ENCODE measurements at regions of chr14 and their contacts with region 1.

Region 1: DNA sequence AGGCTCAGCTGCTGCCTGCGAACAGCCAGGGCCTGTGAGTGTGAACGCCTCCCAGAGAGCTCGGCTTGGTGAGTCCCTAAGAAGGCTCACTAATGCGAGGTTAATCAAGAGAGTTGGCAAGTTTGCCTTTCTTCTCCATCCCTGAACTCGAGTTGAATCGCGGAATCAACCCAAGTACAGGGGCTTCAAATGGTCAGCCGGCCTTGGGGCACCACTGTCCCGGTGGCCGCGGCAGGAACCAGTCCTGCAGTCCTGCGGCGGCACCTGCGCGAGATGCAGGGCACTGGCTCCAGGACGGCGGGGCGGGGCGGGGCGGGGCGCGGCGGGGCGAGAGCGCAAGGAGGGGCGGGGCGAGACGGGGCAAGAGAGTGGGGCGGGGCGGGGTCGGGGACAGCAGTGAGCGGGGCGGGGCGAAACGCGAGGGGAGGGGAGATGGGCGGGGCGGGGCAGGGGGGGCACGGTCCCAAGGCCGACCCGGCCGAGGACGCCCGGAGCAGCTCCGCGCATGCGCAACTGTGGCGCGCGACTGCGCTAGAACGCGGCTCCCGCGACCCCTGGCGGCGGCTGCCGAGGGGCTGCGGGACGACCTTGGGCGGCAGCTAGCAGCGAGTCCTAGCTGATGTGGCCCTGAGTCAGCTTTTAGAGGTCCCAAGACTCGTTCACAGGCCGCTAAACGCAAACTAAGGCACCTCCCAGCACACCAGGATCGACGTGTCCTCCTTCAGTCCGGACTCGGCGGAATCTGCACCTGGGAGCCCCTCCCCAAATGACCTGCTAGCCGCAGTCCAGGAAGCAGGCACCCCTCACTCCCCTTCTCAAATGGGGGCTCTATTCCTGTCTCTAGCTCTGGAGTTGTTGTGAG is 58.0 kb downstream of the TTC7B start:
- DNase-seq: peak; percentile 96
- ATAC-seq: peak; percentile 85
- H3K4me3 ChIP-seq: peak overlapping the region; percentile 59 to 77 (median 66)
- H3K4me3 Mint-ChIP-seq: peak overlapping the region; percentile 82
- H3K27ac ChIP-seq: peak overlapping the region; percentile 71 to 79
- H3K27ac Mint-ChIP-seq: peak overlapping the region; percentile 66
- H3K4me1 ChIP-seq: peaks cover 22 to 29% of the 10 kb centered on the region in 2 donors
- H3K4me1 Mint-ChIP-seq: peaks cover 20% of the 10 kb centered on the region
- H3K27me3 ChIP-seq: no peaks in the 10 kb centered on the region
- H3K27me3 Mint-ChIP-seq: peaks cover 3% of the 10 kb centered on the region
- CTCF ChIP-seq: peak; percentile 78

Region 2: DNA sequence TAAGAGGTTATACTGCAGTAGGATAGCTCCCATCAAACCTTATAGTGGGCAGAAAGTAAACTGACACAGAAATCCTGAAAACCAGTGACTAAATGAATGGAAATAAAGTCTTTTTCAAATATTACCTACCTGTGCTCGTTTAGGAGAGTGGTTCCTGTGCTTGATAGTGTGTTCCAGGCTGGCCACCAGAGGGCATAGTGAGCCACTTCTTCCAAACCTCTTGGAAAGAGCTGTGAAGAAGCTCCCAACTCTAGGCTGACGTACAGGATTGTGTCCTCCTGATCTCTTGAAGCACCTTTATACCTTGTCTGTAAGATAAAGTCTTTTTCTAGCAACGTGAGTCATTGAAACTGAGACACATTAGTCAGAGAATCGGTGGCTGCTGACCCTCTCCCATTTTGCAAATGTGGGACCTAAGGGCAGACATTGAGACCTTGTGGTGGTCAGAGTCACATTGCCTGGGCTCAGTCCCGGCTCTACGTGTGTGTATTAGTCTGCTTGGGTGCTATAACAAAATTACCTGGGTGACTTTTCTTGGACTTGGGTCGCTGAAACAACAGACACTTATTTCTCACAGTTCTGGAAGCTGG is 784.9 kb before region 1 on chr14:
- CTCF ChIA-PET with region 1: interaction called, 16 read pairs
- POLR2A ChIA-PET with region 1: no interaction called
- intact Hi-C with region 1: no loop called
- DNase-seq: peak; percentile 55
- ATAC-seq: peak; percentile 41
- H3K4me3 ChIP-seq: no peak overlapping the region
- H3K4me3 Mint-ChIP-seq: no peak overlapping the region
- H3K27ac ChIP-seq: no peak overlapping the region
- H3K27ac Mint-ChIP-seq: no peak overlapping the region
- H3K4me1 ChIP-seq: no peaks in the 10 kb centered on the region
- H3K4me1 Mint-ChIP-seq: no peaks in the 10 kb centered on the region
- H3K27me3 ChIP-seq: no peaks in the 10 kb centered on the region
- H3K27me3 Mint-ChIP-seq: no peaks in the 10 kb centered on the region
- CTCF ChIP-seq: peak; percentile 84

Region 3: DNA sequence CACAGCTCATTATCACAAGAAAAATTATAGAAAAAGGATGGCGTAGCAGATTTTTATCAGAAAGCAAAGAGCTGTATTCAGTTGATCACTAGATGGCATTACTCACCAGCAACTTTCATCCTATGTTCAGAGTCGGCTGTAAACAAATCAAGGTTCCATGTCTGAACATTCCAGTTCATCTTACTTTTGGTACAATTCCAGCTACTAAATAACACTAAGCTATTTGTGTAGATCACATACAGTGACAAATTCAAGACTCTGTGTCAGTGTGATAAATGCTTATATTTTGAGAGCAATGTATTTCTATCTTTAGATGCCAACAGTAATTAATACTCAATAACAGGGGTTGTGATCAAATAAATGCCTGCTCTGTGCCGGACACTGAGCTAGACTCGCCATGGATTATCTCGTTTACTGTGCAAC is 456.6 kb before region 1 on chr14:
- CTCF ChIA-PET with region 1: interaction called, 12 read pairs
- POLR2A ChIA-PET with region 1: no interaction called
- intact Hi-C with region 1: no loop called
- DNase-seq: peak; percentile 22
- ATAC-seq: no peak
- H3K4me3 ChIP-seq: no peak overlapping the region
- H3K4me3 Mint-ChIP-seq: no peak overlapping the region
- H3K27ac ChIP-seq: no peak overlapping the region
- H3K27ac Mint-ChIP-seq: no peak overlapping the region
- H3K4me1 ChIP-seq: no peaks in the 10 kb centered on the region
- H3K4me1 Mint-ChIP-seq: peaks cover 5% of the 10 kb centered on the region
- H3K27me3 ChIP-seq: no peaks in the 10 kb centered on the region
- H3K27me3 Mint-ChIP-seq: no peaks in the 10 kb centered on the region
- CTCF ChIP-seq: peak; percentile 28

Region 4: DNA sequence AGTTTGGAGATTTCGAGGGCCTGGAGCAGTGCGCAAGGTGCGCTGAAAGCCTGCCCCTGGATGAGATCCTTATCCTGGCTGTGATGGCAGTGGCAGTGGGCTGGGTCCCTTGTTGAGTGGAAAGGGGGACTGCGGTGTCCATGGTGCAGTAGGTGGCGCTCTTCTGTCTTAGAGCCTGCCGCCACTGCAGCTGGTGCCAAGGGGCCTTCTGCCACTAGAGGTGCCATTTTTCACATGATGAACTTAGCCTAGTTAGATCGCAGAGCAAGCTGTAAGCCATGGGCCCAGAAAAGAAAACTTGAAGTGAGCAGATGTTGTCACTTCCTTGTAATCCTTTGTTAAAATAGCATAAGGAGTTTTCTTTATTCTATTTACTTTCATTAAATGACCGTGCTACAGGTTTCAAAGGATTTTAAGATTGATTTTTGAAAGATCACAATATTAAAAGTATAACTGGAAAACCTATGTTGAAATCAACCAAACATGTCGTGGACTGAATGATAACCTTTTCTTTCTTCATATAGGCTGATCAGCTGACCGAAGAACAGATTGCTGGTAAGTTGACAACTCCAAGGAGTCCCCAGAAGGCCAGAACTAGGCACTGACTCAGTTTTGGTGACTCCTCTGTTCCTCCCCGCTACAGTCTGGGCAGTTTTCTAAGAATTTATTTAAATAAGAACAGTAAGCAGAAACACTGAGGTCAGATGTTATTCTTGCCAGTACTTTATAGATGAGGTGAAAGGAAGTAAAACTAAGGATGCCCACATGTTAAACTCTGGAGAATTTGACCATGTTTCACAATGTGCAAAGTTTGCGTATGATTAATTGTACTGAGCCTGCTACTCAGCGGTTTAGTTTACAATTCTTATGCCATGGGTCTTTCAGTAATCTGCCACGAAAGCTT is 358.5 kb before region 1 on chr14:
- CTCF ChIA-PET with region 1: interaction called, 24 read pairs
- POLR2A ChIA-PET with region 1: interaction called, 20 read pairs
- intact Hi-C with region 1: no loop called
- DNase-seq: peak; percentile 92
- ATAC-seq: peak; percentile 39
- H3K4me3 ChIP-seq: peak overlapping the region in 1 of 5 experiments; percentile 85
- H3K4me3 Mint-ChIP-seq: peak overlapping the region; percentile 96
- H3K27ac ChIP-seq: peak overlapping the region; percentile 93 to 95
- H3K27ac Mint-ChIP-seq: peak overlapping the region; percentile 98
- H3K4me1 ChIP-seq: peaks cover 39 to 45% of the 10 kb centered on the region in 2 donors
- H3K4me1 Mint-ChIP-seq: peaks cover 46% of the 10 kb centered on the region
- H3K27me3 ChIP-seq: no peaks in the 10 kb centered on the region
- H3K27me3 Mint-ChIP-seq: no peaks in the 10 kb centered on the region
- CTCF ChIP-seq: peak; percentile 100

Region 5: DNA sequence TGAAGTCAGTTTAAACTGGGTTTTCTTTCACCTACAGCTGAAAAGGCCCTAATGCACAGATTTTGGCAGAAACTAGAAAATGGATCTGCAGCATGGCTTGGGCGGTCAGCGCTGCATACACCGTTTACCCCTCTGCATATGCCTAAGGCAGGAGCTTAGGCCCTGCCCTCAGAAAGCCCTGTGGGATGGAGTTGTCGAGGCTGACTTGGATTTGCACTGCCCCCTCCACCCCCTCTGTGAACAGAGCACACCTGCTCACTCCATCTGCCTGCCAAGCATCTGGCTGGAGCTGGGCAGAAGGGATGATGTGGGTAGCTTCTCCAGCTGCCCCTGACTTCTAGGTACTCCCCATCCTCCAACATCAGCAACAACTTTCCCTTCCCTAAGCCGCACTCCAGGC is 16.1 kb after region 1 on chr14:
- CTCF ChIA-PET with region 1: interaction called, 13 read pairs
- POLR2A ChIA-PET with region 1: no interaction called
- intact Hi-C with region 1: no loop called
- DNase-seq: no peak
- ATAC-seq: no peak
- H3K4me3 ChIP-seq: no peak overlapping the region
- H3K4me3 Mint-ChIP-seq: no peak overlapping the region
- H3K27ac ChIP-seq: no peak overlapping the region
- H3K27ac Mint-ChIP-seq: no peak overlapping the region
- H3K4me1 ChIP-seq: no peaks in the 10 kb centered on the region
- H3K4me1 Mint-ChIP-seq: no peaks in the 10 kb centered on the region
- H3K27me3 ChIP-seq: no peaks in the 10 kb centered on the region
- H3K27me3 Mint-ChIP-seq: no peaks in the 10 kb centered on the region
- CTCF ChIP-seq: no peak

Region 6: GRCh38 chr14:91114079-91115065 is 356.1 kb after region 1 on chr14:
- CTCF ChIA-PET with region 1: no interaction called
- POLR2A ChIA-PET with region 1: no interaction called
- intact Hi-C with region 1: loop called (anchors 5 kb)
- DNase-seq: peak; percentile 85
- ATAC-seq: peak; percentile 80
- H3K4me3 ChIP-seq: peak overlapping the region; percentile 71 to 94 (median 82)
- H3K4me3 Mint-ChIP-seq: peak overlapping the region; percentile 93
- H3K27ac ChIP-seq: peak overlapping the region; percentile 89 to 95
- H3K27ac Mint-ChIP-seq: peak overlapping the region; percentile 98
- H3K4me1 ChIP-seq: peaks cover 35 to 50% of the 10 kb centered on the region in 2 donors
- H3K4me1 Mint-ChIP-seq: peaks cover 68% of the 10 kb centered on the region
- H3K27me3 ChIP-seq: no peaks in the 10 kb centered on the region
- H3K27me3 Mint-ChIP-seq: no peaks in the 10 kb centered on the region
- CTCF ChIP-seq: no peak

Measured in B cell (primary cell).